Activated T-helper 1 cell treated with anti-CD3 and anti-CD28 coated beads, Interleukin-12 subunit alpha, Interleukin-12 subunit beta, Interleukin-2, Interleukin-4 antibody, amounts not matched to agents 30 ng/mL and 10 ng/mL and 1 ng/mL, durations not matched to agents 14 hours and 24 hours and 36 hours (primary cell): ENCODE measurements at regions of chr22 and their contacts with region 1.

Region 1: GRCh38 chr22:38051900-38052862 is 5.0 kb upstream of the PICK1 start:
- DNase-seq: peak; percentile 59
- H3K4me3 Mint-ChIP-seq: no peak overlapping the region
- H3K27ac Mint-ChIP-seq: no peak overlapping the region
- H3K4me1 Mint-ChIP-seq: peaks cover 13% of the 10 kb centered on the region
- H3K27me3 Mint-ChIP-seq: peaks cover 8% of the 10 kb centered on the region

Region 2: DNA sequence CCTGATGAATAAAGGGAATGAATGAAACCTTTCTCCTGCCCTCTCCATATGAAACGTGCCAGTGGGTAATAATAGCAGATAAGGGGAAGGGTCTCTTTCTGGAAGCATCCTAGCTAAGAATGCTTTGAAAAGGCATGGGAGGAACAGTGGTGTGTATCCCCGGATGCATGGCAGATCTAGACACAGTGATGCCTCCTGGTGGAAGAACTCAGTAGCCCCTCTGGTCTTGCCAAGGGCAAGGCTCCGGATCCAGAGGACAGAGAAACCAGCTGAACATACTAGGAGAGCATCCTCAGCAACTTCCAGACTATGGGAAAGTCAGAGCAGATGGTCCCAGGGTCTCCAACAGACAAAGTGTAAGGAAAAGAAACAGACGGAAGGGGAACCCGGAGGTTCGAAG is 51.9 kb after region 1 on chr22:
- intact Hi-C with region 1: loop called (anchors 5 kb)
- DNase-seq: no peak
- H3K4me3 Mint-ChIP-seq: no peak overlapping the region
- H3K27ac Mint-ChIP-seq: no peak overlapping the region
- H3K4me1 Mint-ChIP-seq: peaks cover 5% of the 10 kb centered on the region
- H3K27me3 Mint-ChIP-seq: peaks cover 2% of the 10 kb centered on the region

Region 3: DNA sequence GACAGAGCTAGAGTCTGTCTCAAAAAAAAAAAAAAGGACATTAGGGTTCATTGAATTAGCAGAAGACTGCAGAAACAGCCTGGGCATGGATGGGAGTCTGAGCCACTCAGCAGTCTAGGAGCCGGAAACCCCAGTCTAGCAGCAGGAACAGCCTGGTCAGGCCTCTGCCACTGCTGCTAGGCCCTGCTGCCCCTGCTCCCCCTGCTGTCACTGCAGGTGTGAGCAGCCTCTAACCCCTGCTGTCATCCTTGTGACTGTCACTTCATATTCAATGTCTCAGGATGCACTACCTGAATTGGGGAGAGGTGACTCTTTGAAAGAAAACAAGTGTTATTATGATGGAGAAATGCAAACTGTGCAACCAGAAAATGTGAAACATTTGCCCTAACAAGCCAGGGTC is 460.9 kb after region 1 on chr22:
- intact Hi-C with region 1: loop called (anchors 1 kb)
- DNase-seq: peak; percentile 38
- H3K4me3 Mint-ChIP-seq: no peak overlapping the region
- H3K27ac Mint-ChIP-seq: no peak overlapping the region
- H3K4me1 Mint-ChIP-seq: no peaks in the 10 kb centered on the region
- H3K27me3 Mint-ChIP-seq: no peaks in the 10 kb centered on the region